ENCODE measurements at regions of chr7 and their contacts with region 1.

Region 1: GRCh38 chr7:39746103-39746819 is 122.9 kb downstream of the RALA start:
- DNase-seq: peak; percentile 47 to 96 (median 78)

Region 2: GRCh38 chr7:39580149-39580874 is 165.9 kb before region 1 on chr7:
- intact Hi-C with region 1: loop called (anchors 1 kb)
- DNase-seq: peak; percentile 33 to 93 (median 78)

Measured in posterior cingulate gyrus (tissue), 11 donors.